HCT116 (cell line): ENCODE measurements at regions of chr15 and their contacts with region 1.

Region 1: GRCh38 chr15:20344601-20345400 is 196.8 kb downstream of the GOLGA6L6 start:
- DNase-seq: no peak
- ATAC-seq: no peak
- H3K4me3 ChIP-seq: no peak overlapping the region
- H3K27ac ChIP-seq: no peak overlapping the region
- H3K4me1 ChIP-seq: no peaks in the 10 kb centered on the region
- H3K27me3 ChIP-seq: no peaks in the 10 kb centered on the region
- CTCF ChIP-seq: no peak
- POLR2A ChIP-seq: no peak
- RAD21 ChIP-seq: no peak

Region 2: GRCh38 chr15:20386198-20386597 is 41.4 kb after region 1 on chr15:
- CTCF ChIA-PET with region 1: no interaction called
- POLR2A ChIA-PET with region 1: no interaction called
- RAD21 ChIA-PET with region 1: no interaction called
- intact Hi-C with region 1: loop called (anchors 5 kb)
- DNase-seq: no peak
- ATAC-seq: no peak
- H3K4me3 ChIP-seq: no peak overlapping the region
- H3K27ac ChIP-seq: no peak overlapping the region
- H3K4me1 ChIP-seq: no peaks in the 10 kb centered on the region
- H3K27me3 ChIP-seq: no peaks in the 10 kb centered on the region
- CTCF ChIP-seq: no peak
- POLR2A ChIP-seq: no peak
- RAD21 ChIP-seq: no peak